ENCODE measurements at regions of chr2 and their contacts with region 1.

Region 1: DNA sequence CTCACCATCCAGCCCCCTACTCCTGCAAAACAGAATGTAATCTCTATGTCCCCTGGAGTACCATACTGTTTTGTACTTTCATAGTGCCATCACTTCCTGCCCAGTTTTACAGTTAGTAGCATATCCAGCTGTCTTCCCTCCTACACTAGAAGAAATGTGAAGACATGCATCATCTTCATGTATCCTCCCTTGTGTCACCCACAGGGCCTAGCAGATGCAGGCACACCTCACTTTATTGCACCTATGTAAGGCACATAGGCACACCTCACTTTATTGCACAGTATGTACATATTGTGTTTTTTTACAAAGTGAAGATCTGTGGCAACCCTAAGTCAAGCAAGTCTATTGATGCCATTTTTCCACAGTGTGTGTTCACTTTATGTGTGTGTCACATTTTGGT is 12.0 kb downstream of the DNAJC27 start:
- DNase-seq: no peak
- CTCF ChIP-seq: no peak

Region 2: DNA sequence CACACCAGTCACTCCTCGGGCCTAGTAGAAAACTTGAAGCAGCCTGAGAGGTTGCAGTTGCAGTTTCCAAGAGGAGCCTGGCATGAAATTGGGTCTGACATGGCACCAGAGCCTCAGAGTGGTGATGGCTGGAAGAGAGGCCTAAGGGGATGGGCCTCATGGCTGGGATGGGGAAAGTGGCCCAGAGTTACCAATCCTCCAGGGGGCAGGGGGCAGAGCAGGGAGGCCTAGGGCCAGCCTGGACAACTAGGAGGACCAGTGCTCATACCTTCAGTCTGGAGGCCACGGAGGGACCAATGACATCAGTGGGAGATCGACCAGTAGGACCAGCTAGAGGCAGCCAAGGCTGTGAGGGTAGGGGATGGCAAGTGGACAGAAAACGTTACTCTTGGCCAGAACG is 24.6 kb before region 1 on chr2:
- CTCF ChIA-PET with region 1: no interaction called
- POLR2A ChIA-PET with region 1: no interaction called
- DNase-seq: no peak
- CTCF ChIP-seq: no peak

Region 3: GRCh38 chr2:24977631-24978030 is 17.9 kb after region 1 on chr2:
- CTCF ChIA-PET with region 1: interaction called, 15 read pairs
- POLR2A ChIA-PET with region 1: no interaction called
- DNase-seq: no peak
- CTCF ChIP-seq: no peak